ENCODE measurements at regions of chr7 and their contacts with region 1.

Region 1: DNA sequence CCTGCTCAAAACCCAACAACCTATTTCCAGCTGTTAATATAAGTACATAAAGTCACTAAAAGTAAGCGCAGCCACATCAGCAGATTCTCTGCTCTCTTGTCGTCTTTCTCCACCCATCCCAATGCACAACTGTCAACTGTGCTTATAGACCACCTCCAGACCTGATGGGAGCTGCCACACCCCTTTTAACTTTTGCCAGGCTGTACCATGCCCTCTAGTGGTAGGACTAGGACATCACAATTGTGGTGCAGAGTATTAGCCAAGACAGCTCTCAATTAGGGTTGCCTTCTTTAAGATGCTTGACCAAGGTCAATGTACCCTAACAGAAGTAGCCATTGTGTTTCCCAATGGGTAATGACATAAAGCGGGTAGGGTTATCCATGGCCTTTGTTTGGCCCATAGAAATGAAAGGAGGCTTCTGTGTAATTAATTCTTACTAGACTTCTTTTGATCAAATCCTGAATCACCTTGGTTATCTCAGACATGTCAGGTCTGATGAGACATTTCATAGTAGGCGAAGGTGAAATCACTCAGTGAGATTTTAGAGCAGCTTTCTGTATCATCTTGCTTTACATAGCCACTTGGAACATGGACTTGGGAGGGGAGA is 68.1 kb downstream of the SCRN1 start:
- DNase-seq: peak; percentile 75
- H3K4me3 Mint-ChIP-seq: no peak overlapping the region
- H3K27ac Mint-ChIP-seq: no peak overlapping the region
- H3K4me1 Mint-ChIP-seq: peaks cover 3% of the 10 kb centered on the region
- H3K27me3 Mint-ChIP-seq: peaks cover 28% of the 10 kb centered on the region
- CTCF ChIP-seq: peak; percentile 82

Region 2: DNA sequence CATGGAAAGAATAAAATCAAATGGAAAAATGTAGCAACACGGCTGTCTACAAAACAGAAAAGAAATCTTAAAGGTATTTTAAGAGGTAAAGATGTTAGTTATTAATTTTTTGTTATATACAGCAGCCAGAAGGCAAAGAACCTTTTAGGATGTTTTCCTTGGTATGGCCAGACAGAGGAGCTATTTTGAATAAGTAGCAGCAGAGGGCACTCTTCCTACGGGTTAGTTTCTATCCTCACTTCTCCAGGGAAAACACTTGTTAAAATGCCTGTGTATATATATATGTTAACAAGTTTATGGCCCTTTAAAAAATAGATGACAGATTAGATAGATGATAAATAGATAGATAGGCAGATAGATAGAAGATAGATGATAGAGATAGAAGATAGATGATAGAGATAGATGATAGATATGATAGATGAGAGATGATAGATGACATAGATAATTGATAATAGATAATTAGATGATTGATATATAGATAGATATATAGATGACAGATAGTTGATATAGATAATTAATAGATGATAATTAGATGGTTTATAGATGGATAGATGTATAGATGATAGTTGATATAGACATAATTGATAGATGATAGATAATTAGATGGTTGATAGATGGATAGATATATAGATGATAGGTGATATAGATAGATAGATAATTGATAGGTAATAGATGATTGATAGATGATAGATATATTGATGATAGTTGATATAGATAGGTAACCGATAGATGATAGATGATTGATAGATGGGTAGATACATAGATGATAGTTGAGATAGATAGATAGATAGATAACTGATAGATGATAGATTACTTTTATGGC is 173.0 kb before region 1 on chr7:
- CTCF ChIA-PET with region 1: interaction called, 59 read pairs
- POLR2A ChIA-PET with region 1: interaction called, 6 read pairs
- intact Hi-C with region 1: loop called (anchors 1 kb)
- DNase-seq: peak; percentile 66
- H3K4me3 Mint-ChIP-seq: no peak overlapping the region
- H3K27ac Mint-ChIP-seq: no peak overlapping the region
- H3K4me1 Mint-ChIP-seq: no peaks in the 10 kb centered on the region
- H3K27me3 Mint-ChIP-seq: peaks cover 12% of the 10 kb centered on the region
- CTCF ChIP-seq: peak; percentile 49

Region 3: GRCh38 chr7:29878081-29878688 is 43.3 kb before region 1 on chr7:
- CTCF ChIA-PET with region 1: interaction called, 32 read pairs
- POLR2A ChIA-PET with region 1: no interaction called
- intact Hi-C with region 1: loop called (anchors 1 kb)
- DNase-seq: peak; percentile 59
- H3K4me3 Mint-ChIP-seq: no peak overlapping the region
- H3K27ac Mint-ChIP-seq: no peak overlapping the region
- H3K4me1 Mint-ChIP-seq: no peaks in the 10 kb centered on the region
- H3K27me3 Mint-ChIP-seq: peaks cover 13% of the 10 kb centered on the region
- CTCF ChIP-seq: peak; percentile 57

Region 4: GRCh38 chr7:29935111-29935510 is 13.6 kb after region 1 on chr7:
- CTCF ChIA-PET with region 1: interaction called, 34 read pairs
- POLR2A ChIA-PET with region 1: interaction called, 3 read pairs
- intact Hi-C with region 1: no loop called
- DNase-seq: peak; percentile 15
- H3K4me3 Mint-ChIP-seq: no peak overlapping the region
- H3K27ac Mint-ChIP-seq: no peak overlapping the region
- H3K4me1 Mint-ChIP-seq: peaks cover 5% of the 10 kb centered on the region
- H3K27me3 Mint-ChIP-seq: no peaks in the 10 kb centered on the region
- CTCF ChIP-seq: no peak

Region 5: DNA sequence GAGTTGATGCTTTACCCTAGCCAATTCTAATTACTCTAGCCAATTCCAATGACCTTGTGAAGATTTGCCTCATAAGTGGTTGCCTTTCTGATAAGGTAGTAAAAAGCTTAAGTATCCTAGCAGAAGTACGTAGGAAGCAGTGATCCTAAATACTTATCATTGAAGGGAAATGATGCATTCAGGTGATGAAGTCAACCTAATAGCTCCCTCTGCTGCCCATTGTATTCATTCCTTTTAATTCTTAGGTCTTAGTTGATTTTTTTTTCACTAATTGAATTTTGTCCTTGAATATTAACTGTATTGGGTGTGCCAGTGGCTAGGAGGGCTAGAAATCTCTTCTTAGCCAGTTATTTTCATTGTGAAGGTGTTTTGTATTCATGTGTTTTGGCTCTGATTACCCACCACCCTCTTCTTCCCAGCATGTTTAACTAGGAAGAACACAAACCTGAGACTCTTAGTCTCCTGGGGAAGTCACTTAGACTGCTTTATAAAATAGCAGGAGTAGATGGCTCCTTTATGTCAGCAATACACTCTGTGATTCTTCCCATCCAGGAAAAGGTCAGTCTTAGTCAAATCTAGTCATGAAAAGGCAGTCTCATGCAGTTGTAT is 153.0 kb after region 1 on chr7:
- CTCF ChIA-PET with region 1: interaction called, 11 read pairs
- POLR2A ChIA-PET with region 1: no interaction called
- intact Hi-C with region 1: no loop called
- DNase-seq: peak; percentile 59
- H3K4me3 Mint-ChIP-seq: no peak overlapping the region
- H3K27ac Mint-ChIP-seq: no peak overlapping the region
- H3K4me1 Mint-ChIP-seq: peaks cover 6% of the 10 kb centered on the region
- H3K27me3 Mint-ChIP-seq: no peaks in the 10 kb centered on the region
- CTCF ChIP-seq: peak; percentile 40

Region 6: DNA sequence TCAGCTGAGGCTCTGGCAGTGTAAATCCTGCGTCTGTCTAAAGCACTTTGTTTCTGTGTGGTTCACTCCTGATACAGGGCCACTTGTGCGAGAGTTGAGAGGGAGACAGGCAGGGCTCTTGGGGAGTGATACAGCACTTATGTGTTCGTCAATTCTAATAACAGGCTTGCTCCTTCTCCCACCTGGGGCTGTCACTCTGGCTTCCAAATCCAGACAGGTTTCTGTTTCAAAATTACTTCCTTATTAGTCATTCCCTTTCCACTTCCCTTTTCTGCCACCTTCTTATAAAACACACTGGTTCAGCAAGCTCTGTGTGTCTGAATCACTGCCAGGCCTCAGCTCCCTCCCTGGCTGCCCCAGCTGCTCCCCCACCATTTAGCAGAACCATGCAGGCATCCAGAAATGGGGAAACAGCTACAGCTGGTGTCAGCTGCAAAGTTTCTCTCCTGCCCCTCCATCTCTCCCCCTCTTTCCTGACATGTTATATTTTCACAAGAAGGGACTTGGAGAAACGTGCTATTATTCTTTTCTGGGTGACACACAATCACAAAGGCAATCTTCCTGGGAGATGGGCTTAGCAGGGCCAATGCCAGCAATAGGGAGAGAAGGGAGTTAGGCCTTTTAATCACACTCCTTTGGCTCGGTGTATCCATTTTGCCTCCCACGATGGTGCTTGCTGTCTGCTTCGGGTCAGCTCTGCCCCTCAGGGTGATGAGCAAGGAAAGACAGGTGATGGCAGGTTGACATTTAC is 304.5 kb after region 1 on chr7:
- CTCF ChIA-PET with region 1: no interaction called
- POLR2A ChIA-PET with region 1: no interaction called
- intact Hi-C with region 1: no loop called
- DNase-seq: peak; percentile 86
- H3K4me3 Mint-ChIP-seq: no peak overlapping the region
- H3K27ac Mint-ChIP-seq: peak overlapping the region; percentile 54
- H3K4me1 Mint-ChIP-seq: peaks cover 32% of the 10 kb centered on the region
- H3K27me3 Mint-ChIP-seq: no peaks in the 10 kb centered on the region
- CTCF ChIP-seq: no peak